ENCODE measurements at regions of chr1 and their contacts with region 1.

Region 1: DNA sequence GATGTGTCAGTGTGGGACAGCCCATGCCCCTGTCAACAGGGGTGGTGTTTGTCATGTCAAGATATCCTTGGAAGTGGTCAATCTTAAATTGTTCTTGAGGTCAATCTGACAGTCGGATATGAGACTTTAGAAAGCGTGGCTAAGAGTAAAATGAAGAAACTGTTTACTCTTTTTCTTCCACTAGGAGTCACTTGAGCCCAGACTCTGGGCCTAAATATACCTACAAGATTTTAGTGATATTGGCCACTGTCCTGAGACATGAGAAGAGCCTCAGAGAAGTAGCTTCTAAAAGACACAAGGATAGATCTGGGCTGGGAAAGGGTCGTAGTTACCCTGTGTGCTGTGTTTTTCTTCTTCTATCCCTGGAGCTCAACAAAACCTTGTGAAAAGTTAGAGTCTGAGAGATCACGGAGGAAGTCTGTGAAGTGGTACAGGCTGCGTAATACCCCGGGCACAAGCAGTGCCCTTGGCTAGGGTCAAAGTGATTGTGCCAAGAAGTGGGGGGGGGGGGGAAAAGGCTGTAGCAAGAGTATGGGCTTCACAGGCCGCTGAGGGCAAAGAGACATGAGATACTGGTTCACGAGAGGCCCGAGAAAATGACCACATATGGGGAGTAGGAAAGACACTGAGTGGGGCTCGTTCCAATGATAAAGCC is 355.2 kb upstream of the GREM2 start:
- DNase-seq: no peak
- H3K4me3 ChIP-seq: no peak overlapping the region
- H3K27ac ChIP-seq: no peak overlapping the region
- H3K4me1 ChIP-seq: peaks cover 0 to 7% (median 3%) of the 10 kb centered on the region in 4 experiments; a peak in 3 of 7 replicates
- H3K27me3 ChIP-seq: no peaks in the 10 kb centered on the region
- CTCF ChIP-seq: peak in 2 of 3 experiments; percentile 49 to 54; a peak in 2 of 4 replicates
- EP300 ChIP-seq: no peak
- POLR2A ChIP-seq: no peak
- RAD21 ChIP-seq: peak; percentile 91 to 92

Region 2: GRCh38 chr1:240888039-240888786 is 79.0 kb before region 1 on chr1:
- CTCF ChIA-PET with region 1: interaction called, 15 read pairs
- POLR2A ChIA-PET with region 1: no interaction called
- DNase-seq: peak; percentile 46 to 87
- H3K4me3 ChIP-seq: no peak overlapping the region
- H3K27ac ChIP-seq: no peak overlapping the region
- H3K4me1 ChIP-seq: peaks cover 0 to 6% (median 0%) of the 10 kb centered on the region in 4 experiments; a peak in 1 of 7 replicates
- H3K27me3 ChIP-seq: no peaks in the 10 kb centered on the region
- CTCF ChIP-seq: peak; percentile 80 to 89 (median 86)
- EP300 ChIP-seq: no peak
- POLR2A ChIP-seq: no peak
- RAD21 ChIP-seq: peak; percentile 99 to 100

Region 3: GRCh38 chr1:240914506-240914905 is 52.7 kb before region 1 on chr1:
- CTCF ChIA-PET with region 1: no interaction called
- POLR2A ChIA-PET with region 1: no interaction called
- DNase-seq: no peak
- H3K4me3 ChIP-seq: no peak overlapping the region
- H3K27ac ChIP-seq: no peak overlapping the region
- H3K4me1 ChIP-seq: no peaks in the 10 kb centered on the region
- H3K27me3 ChIP-seq: no peaks in the 10 kb centered on the region
- CTCF ChIP-seq: no peak
- EP300 ChIP-seq: no peak
- POLR2A ChIP-seq: no peak
- RAD21 ChIP-seq: no peak

Region 4: GRCh38 chr1:241171991-241172390 is 204.8 kb after region 1 on chr1:
- CTCF ChIA-PET with region 1: interaction called, 12 read pairs
- POLR2A ChIA-PET with region 1: no interaction called
- DNase-seq: no peak
- H3K4me3 ChIP-seq: no peak overlapping the region
- H3K27ac ChIP-seq: no peak overlapping the region
- H3K4me1 ChIP-seq: no peaks in the 10 kb centered on the region; a peak in 1 of 7 replicates
- H3K27me3 ChIP-seq: no peaks in the 10 kb centered on the region
- CTCF ChIP-seq: no peak
- EP300 ChIP-seq: no peak
- POLR2A ChIP-seq: no peak
- RAD21 ChIP-seq: no peak

Region 5: DNA sequence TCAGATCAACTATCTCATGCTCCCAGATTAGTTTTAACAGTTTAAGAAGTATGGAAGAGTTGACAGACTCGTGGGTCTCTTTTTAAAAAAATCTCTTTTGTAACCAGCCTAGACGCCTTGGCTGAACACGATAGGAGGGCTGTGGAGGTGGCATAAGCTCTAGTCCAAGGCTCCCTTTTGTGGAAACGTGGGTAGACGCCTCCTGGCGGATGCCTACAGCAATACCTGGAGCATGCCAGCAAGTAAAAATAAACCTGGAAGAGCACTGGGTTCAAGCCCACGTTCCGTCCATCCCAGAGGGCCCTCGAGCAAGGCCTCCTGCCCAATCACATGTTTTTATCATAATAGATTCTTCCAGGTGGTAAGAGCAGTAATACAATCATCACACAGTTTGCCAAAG is 301.9 kb after region 1 on chr1:
- CTCF ChIA-PET with region 1: interaction called, 15 read pairs
- POLR2A ChIA-PET with region 1: no interaction called
- DNase-seq: peak in 1 of 2 experiments; percentile 53
- H3K4me3 ChIP-seq: no peak overlapping the region
- H3K27ac ChIP-seq: no peak overlapping the region
- H3K4me1 ChIP-seq: no peaks in the 10 kb centered on the region
- H3K27me3 ChIP-seq: no peaks in the 10 kb centered on the region
- CTCF ChIP-seq: peak; percentile 49 to 62 (median 53)
- EP300 ChIP-seq: no peak
- POLR2A ChIP-seq: no peak
- RAD21 ChIP-seq: peak; percentile 60 to 75